ENCODE measurements at regions of chr1 and their contacts with region 1.

Region 1: DNA sequence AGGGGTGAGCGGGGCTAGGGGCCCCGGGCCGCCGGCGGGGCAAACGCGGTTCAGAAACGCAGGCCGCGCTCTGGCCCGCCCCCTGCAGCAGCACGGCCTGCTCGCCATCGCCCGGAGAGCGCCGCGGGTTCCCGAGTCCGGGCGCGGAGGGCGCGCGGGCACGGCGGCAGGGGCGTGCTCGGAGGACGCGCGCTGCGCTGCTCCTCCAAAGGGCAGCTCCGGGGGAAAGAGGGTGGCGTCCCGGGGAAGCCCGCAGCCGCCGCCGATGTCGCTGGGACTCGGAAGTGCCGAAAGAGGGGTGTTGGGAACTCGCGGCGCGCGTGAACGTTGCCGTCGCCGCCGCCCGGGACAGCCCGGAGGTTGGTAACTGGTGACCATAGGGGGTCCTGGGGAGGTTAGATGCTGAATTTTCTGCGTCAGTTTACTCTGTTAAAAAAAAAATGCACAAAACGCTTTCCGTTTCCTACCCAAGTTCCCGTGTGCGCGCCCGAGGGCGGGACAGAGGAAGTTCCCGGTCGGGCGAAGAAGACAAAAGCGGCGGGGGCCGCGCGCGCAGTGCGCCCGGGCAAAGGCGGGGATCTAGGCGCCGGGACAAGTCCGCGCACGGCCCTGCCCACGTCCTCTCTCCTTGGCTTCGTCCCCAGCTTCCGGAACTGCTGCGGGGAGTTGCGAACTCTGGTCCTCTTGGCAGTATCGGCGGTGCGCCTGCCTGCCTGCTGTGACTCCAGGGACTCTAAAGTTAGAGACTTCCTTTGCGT is at the start of gene HHAT:
- DNase-seq: peak; percentile 80
- ATAC-seq: peak; percentile 34
- H3K4me3 Mint-ChIP-seq: peak within 1 kb of the TSS; percentile 82
- H3K27ac Mint-ChIP-seq: peak within 1 kb of the TSS; percentile 95
- H3K4me1 Mint-ChIP-seq: peaks cover 36% of the 10 kb centered on the region
- H3K27me3 Mint-ChIP-seq: peaks cover 3% of the 10 kb centered on the region
- total RNA-seq, gene HHAT: 0.82 to 0.84 TPM

Region 2: GRCh38 chr1:209755926-209756614 is 572.9 kb before region 1 on chr1 and contains the start of gene TRAF3IP3:
- CTCF ChIA-PET with region 1: interaction called, 3 read pairs
- POLR2A ChIA-PET with region 1: no interaction called
- intact Hi-C with region 1: loop called in 1 of 2 experiments (anchors 10 kb)
- DNase-seq: peak; percentile 89
- ATAC-seq: peak; percentile 76
- H3K4me3 Mint-ChIP-seq: peak within 1 kb of the TSS; percentile 95
- H3K27ac Mint-ChIP-seq: peak within 1 kb of the TSS; percentile 99
- H3K4me1 Mint-ChIP-seq: peaks cover 75% of the 10 kb centered on the region
- H3K27me3 Mint-ChIP-seq: no peaks in the 10 kb centered on the region
- total RNA-seq, gene TRAF3IP3: 136 to 138 TPM

Region 3: DNA sequence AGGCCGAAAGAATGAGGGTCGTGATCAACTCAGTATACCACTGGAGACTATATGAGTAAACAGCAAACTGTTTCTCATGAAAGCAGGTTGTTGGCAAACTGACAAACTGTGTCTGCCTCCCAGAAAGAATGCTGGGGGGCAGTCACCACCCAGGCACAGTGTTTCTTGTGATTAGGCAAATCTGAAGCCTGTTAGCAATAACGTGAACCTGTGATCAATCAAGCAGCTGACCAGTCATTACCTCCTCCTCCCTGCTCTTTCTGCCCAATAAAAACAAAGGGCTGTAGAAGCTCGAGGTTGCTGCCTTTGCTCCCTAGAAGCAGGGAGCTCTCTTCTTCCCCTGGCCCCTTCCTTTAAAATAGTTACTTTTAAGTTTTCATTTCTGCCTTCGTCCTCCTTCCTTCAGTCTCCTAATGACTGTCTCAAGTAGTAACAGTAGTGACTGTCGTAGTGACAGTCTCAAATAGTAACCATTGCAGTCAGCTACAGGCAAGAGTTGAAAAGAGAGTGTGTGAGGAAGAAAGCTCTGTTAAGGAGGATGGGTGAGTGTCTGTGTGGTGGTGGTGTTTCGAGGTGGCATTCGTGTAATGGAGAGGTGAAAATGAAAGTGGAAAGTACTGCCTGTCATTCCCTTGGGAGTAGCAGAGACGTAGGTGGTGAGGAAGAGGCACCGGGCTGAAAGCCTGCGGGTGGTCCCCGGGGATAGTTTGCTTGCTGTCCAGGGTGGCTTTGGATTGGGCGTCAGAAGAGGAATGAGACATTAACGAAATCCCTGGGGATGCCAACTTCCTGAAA is 14.3 kb after region 1 on chr1:
- CTCF ChIA-PET with region 1: interaction called, 20 read pairs
- POLR2A ChIA-PET with region 1: interaction called, 15 read pairs
- intact Hi-C with region 1: loop called (anchors 1 kb)
- DNase-seq: no peak
- ATAC-seq: peak; percentile 50
- H3K4me3 Mint-ChIP-seq: no peak overlapping the region
- H3K27ac Mint-ChIP-seq: no peak overlapping the region
- H3K4me1 Mint-ChIP-seq: peaks cover 37% of the 10 kb centered on the region
- H3K27me3 Mint-ChIP-seq: no peaks in the 10 kb centered on the region

Region 4: GRCh38 chr1:210464519-210465039 is 135.7 kb after region 1 on chr1:
- CTCF ChIA-PET with region 1: no interaction called
- POLR2A ChIA-PET with region 1: no interaction called
- intact Hi-C with region 1: loop called (anchors 2 to 5 kb)
- DNase-seq: peak; percentile 45
- ATAC-seq: peak; percentile 92
- H3K4me3 Mint-ChIP-seq: no peak overlapping the region
- H3K27ac Mint-ChIP-seq: peak overlapping the region; percentile 37
- H3K4me1 Mint-ChIP-seq: peaks cover 24% of the 10 kb centered on the region
- H3K27me3 Mint-ChIP-seq: no peaks in the 10 kb centered on the region

Measured in activated CD4-positive, alpha-beta T cell treated with anti-CD3 and anti-CD28 coated beads for 36 hours (primary cell).